Dendritic cell treated with granulocyte-macrophage colony-stimulating factor and Interleukin-4, amounts not matched to agents 40 ng/mL and 50 ng/mL, for 4 days (primary cell): ENCODE measurements at regions of chr3 and their contacts with region 1.

Region 1: DNA sequence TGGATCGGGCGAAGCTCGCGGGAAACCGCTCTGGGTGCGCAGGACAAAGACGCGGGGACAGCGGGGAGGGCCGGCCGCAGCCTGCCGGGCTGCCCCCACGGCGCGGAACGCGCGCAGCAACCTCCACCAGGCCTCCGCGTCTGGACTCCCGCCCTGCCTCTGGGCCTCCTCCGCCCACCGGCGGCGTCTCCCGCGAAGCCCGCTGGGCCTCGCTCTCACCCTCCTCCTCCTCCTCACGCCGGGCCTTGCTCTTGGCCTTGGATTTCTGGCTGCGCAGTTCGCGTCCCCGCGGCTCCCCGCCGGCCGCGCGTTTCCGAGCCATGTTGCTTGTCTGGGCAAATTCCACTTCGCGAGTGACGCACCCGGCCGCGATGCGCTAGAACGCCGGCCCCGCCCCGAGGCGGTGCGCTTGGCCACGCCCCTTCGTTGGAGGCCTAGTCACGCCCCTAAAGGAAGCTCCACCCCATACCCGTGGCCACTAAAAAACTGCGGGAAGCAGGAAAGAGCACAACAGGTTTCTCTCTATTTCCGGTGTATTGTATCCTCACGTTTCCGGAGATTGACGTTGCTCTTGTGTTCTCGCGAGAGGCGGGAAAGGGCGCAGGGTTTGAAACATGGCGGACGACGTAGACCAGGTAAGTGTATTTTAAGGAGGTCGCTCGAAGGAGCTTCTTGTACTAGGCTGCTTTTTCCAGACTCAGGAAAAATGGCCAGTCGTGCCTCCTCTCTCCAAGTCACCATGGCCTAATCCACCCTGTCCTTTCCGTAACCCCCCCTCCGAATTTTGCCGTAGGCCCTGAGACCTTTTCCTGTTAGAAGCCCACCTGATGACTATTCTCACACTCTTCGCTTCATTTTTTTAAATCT is at the starts of genes LSM3 and XPC:
- H3K4me3 Mint-ChIP-seq: peak within 1 kb of the TSS; percentile 91
- H3K27ac Mint-ChIP-seq: peak within 1 kb of the TSS; percentile 98
- H3K4me1 Mint-ChIP-seq: peaks cover 43% of the 10 kb centered on the region
- H3K27me3 Mint-ChIP-seq: no peaks in the 10 kb centered on the region

Region 2: GRCh38 chr3:13895155-13896105 is 283.1 kb before region 1 on chr3:
- intact Hi-C with region 1: loop called (anchors 10 kb)
- H3K4me3 Mint-ChIP-seq: peak overlapping the region; percentile 83
- H3K27ac Mint-ChIP-seq: peak overlapping the region; percentile 80
- H3K4me1 Mint-ChIP-seq: peaks cover 21% of the 10 kb centered on the region
- H3K27me3 Mint-ChIP-seq: peaks cover 32% of the 10 kb centered on the region

Region 3: DNA sequence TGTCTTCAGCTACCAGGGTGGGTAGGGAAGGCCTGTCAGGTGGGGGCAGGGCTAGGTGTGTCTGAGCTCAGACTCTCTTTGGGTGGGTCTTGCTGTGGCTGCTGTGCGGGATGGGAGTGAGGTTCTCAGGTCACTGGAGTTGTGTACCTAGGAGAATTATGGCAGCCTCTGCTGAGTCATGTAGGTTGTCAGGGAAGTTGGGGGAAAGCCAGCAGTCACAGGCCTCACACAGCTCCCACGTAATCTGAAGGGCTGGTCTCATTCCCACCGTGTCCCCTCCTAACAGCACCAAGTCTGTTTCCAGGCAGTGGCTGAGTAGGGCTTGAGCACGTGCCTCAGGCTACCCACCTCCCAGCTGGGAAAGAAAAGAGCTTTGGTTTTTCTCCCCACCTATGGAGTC is 120.8 kb before region 1 on chr3:
- intact Hi-C with region 1: no loop called
- H3K4me3 Mint-ChIP-seq: no peak overlapping the region
- H3K27ac Mint-ChIP-seq: no peak overlapping the region
- H3K4me1 Mint-ChIP-seq: no peaks in the 10 kb centered on the region
- H3K27me3 Mint-ChIP-seq: peaks cover 6% of the 10 kb centered on the region

Region 4: GRCh38 chr3:14144423-14145075 is 33.9 kb before region 1 on chr3:
- intact Hi-C with region 1: loop called (anchors 1 kb)
- H3K4me3 Mint-ChIP-seq: peak overlapping the region; percentile 71
- H3K27ac Mint-ChIP-seq: peak overlapping the region; percentile 88
- H3K4me1 Mint-ChIP-seq: peaks cover 85% of the 10 kb centered on the region
- H3K27me3 Mint-ChIP-seq: no peaks in the 10 kb centered on the region